Astrocyte of the cerebellum (primary cell): ENCODE measurements at regions of chr5 and their contacts with region 1.

Region 1: DNA sequence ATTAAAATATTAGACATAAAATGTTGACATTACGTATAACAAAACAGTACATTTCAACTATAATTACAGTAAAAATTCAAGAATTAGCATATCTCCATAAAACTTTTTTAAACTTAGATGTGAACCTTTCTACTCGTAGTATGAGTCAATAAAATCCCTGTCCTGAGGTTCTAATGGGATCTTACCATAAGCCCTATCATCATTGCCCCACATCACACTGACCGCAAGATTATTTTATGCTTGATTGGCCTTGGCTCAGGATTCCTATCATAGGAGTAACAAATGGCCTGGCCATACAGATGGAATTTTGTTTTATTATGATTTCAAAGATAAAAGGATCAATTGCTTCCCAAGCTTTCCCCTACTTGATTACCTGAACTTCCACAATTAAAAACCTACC is 238.3 kb downstream of the MEF2C start:
- DNase-seq: no peak
- H3K4me3 ChIP-seq: no peak overlapping the region
- CTCF ChIP-seq: no peak

Region 2: DNA sequence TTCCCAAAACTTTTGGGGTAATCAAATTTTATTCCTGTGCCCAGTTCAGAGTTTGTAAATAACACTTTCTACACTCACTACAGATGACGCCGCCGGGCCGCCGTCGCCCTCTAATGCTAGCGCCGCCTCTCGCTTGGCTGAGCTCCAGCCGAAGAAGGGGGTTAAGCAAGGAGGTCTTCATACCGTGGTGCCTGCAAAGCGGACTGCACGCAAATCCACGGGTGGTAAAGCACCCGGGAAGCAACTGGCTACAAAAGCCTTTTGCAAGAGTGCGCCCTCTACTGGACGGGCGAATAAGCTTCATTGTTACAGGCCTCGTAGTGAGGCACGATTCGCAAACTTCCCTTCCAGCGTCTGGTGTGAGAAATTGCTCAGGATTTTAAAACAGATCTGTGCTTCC is 42.1 kb before region 1 on chr5:
- in situ Hi-C with region 1: loop called (anchors 5 kb)
- DNase-seq: no peak
- H3K4me3 ChIP-seq: no peak overlapping the region
- CTCF ChIP-seq: peak; percentile 23

Region 3: GRCh38 chr5:88813805-88814575 is 169.3 kb after region 1 on chr5:
- in situ Hi-C with region 1: no loop called
- DNase-seq: no peak
- H3K4me3 ChIP-seq: no peak overlapping the region
- CTCF ChIP-seq: no peak